MCF 10A (cell line): ENCODE measurements at regions of chr6 and their contacts with region 1.

Region 1: DNA sequence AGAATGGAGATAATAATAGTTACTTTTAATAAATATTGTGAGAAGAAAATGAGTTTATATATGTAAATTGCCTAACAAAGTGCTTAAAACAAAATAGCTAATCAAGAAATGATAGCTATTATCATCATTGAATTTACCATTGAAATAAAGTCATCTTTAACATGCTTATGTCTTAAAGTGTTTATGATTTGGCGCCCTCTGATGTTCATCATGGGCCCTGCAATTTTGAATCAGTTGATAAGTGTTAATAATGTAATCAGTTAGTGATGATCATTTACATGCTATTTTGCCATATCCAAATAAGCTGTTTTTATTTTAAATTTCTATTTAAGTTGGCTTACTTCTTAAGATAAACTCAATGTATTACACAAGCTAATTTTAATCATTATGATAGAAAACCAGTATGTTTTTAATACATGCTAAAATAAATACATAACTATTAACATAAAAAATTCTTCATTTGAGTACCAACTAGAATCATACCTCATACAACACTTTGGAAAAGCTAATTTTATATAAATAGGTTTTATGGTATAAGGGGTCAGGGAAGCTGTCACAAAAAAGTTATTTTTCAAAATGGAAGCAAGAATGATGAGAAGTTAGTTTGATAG is 39.2 kb upstream of the TPD52L1 start:
- DNase-seq: peak; percentile 74
- H3K4me3 Mint-ChIP-seq: no peak overlapping the region
- H3K27ac Mint-ChIP-seq: no peak overlapping the region
- H3K4me1 Mint-ChIP-seq: no peaks in the 10 kb centered on the region
- H3K27me3 Mint-ChIP-seq: no peaks in the 10 kb centered on the region
- CTCF ChIP-seq: peak; percentile 84

Region 2: DNA sequence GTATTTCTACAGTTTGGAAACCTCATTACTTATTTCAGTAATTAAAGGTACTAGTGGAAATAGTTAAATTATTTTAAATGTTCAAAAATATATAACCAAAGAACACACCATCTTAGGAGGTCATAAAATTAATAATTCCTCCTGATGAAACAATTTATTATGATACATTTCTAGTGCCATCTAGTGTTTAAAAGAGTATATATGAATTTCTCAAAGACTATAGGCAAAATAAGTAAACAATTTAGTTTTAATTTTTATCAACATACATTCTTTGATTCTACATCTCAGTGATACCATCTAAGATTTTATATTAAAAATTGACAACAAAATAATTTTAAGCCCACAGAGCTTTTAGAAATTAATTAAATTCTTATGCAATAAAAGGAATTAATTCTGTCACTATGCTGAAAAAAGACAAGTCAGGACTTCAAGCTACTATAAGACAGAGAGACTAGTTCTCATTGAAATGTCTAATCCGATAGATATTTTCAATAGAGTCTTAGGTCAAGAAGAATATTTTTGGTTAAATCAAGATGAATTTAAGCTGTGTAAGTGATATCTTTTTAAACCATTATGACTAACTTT is 259.9 kb before region 1 on chr6:
- CTCF ChIA-PET with region 1: no interaction called
- POLR2A ChIA-PET with region 1: no interaction called
- intact Hi-C with region 1: no loop called
- DNase-seq: peak; percentile 11
- H3K4me3 Mint-ChIP-seq: no peak overlapping the region
- H3K27ac Mint-ChIP-seq: no peak overlapping the region
- H3K4me1 Mint-ChIP-seq: no peaks in the 10 kb centered on the region
- H3K27me3 Mint-ChIP-seq: no peaks in the 10 kb centered on the region
- CTCF ChIP-seq: peak; percentile 38

Region 3: DNA sequence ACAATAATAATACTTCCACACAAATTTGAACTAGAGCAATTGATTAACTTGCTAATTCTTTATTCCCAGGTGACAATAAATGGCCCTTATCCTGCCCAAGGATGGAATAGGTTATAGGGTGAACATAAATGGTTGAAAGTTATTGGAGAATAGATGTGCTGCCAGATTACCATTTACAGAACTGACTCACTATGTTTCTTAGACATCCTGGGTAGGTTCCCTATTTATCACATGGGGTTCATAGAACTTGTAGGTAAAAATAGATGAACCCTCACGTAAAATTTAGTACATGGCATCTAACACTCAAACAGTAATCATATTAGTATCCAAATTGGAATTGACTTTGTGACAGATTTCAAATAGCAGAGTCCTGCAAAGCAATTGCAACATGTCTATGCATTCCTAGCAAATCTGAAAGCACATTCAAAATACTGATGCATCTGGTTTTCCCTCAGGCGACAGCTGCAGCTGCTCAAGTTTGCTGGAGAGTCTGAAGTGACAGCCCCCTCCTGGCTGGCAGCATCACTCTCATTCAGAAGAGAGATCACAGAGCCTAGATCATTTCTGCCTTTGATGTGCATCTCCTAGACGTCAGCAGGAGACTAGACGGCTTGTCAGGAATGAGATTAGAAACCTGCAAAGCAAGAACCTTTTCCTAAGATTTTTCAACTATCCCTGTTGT is 232.3 kb before region 1 on chr6:
- CTCF ChIA-PET with region 1: interaction called, 35 read pairs
- POLR2A ChIA-PET with region 1: interaction called, 3 read pairs
- intact Hi-C with region 1: no loop called
- DNase-seq: peak; percentile 66
- H3K4me3 Mint-ChIP-seq: peak overlapping the region; percentile 65
- H3K27ac Mint-ChIP-seq: peak overlapping the region; percentile 97
- H3K4me1 Mint-ChIP-seq: peaks cover 25% of the 10 kb centered on the region
- H3K27me3 Mint-ChIP-seq: no peaks in the 10 kb centered on the region
- CTCF ChIP-seq: no peak

Region 4: GRCh38 chr6:125031385-125031784 is 83.0 kb before region 1 on chr6:
- CTCF ChIA-PET with region 1: no interaction called
- POLR2A ChIA-PET with region 1: no interaction called
- intact Hi-C with region 1: no loop called
- DNase-seq: no peak
- H3K4me3 Mint-ChIP-seq: no peak overlapping the region
- H3K27ac Mint-ChIP-seq: no peak overlapping the region
- H3K4me1 Mint-ChIP-seq: peaks cover 6% of the 10 kb centered on the region
- H3K27me3 Mint-ChIP-seq: no peaks in the 10 kb centered on the region
- CTCF ChIP-seq: no peak

Region 5: DNA sequence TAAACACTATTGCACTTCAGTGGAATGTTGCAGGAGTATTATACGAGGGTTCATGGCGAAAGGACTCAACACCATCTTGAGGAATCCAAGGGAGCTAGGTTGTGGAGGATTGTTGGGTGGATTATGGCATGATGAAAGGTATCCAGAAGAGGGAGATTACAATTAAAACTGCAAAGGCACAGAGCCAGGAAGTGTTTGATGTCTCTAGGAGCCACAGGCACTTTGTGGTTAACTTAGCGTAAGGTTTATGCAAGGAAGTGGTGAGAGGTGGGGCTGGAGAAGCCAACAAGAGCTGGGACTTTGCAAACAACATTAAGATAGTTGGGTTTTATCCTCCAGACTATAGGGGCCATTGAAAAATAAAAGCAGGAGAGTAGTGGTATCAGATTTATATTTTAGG is 47.4 kb before region 1 on chr6:
- CTCF ChIA-PET with region 1: interaction called, 19 read pairs
- POLR2A ChIA-PET with region 1: no interaction called
- intact Hi-C with region 1: no loop called
- DNase-seq: peak; percentile 75
- H3K4me3 Mint-ChIP-seq: no peak overlapping the region
- H3K27ac Mint-ChIP-seq: no peak overlapping the region
- H3K4me1 Mint-ChIP-seq: no peaks in the 10 kb centered on the region
- H3K27me3 Mint-ChIP-seq: no peaks in the 10 kb centered on the region
- CTCF ChIP-seq: no peak

Region 6: DNA sequence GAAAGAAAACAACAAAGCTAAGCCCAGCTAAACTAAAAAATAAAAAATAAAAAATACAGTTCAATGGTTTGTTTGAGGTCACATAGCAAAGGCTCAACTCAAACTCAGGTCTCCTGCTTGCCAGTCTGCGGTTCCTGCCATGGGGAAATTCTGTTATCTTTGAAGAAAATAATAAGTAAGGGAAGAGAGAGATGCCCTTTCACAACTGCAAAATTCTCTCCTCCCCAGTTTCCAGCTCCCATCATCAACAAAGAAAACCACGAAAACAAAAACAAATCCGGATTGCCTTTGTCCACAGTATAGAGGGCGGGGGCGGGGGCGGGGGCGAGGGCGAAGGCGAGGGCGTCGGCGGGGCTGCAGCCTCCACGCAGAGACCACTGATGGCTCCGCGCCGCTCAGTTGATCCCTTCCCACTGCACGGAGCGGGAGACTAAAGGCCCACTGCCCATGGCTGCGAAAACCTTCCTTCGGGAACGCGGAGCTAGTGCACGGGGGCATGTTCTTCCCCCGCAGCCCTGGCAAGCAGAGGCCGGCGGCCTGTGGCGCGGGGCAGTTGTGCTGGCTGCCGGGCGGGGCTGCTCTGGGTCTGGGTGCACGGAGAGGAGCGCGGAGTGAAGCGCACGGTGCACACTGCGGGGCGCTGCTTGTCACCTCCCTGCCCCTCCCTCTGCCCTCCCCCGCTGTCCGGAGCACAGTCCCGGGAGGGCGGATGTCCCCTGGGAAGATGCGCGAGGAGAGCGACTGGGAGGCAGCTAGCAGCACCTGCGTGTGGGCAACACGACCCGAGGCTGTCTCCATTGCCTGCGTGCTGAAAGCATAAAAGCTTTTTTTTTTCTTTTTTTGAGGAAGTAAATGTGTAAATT is 14.9 kb before region 1 on chr6:
- CTCF ChIA-PET with region 1: interaction called, 35 read pairs
- POLR2A ChIA-PET with region 1: interaction called, 4 read pairs
- intact Hi-C with region 1: no loop called
- DNase-seq: peak; percentile 59
- H3K4me3 Mint-ChIP-seq: peak overlapping the region; percentile 69
- H3K27ac Mint-ChIP-seq: peak overlapping the region; percentile 14
- H3K4me1 Mint-ChIP-seq: peaks cover 37% of the 10 kb centered on the region
- H3K27me3 Mint-ChIP-seq: no peaks in the 10 kb centered on the region
- CTCF ChIP-seq: no peak

Region 7: DNA sequence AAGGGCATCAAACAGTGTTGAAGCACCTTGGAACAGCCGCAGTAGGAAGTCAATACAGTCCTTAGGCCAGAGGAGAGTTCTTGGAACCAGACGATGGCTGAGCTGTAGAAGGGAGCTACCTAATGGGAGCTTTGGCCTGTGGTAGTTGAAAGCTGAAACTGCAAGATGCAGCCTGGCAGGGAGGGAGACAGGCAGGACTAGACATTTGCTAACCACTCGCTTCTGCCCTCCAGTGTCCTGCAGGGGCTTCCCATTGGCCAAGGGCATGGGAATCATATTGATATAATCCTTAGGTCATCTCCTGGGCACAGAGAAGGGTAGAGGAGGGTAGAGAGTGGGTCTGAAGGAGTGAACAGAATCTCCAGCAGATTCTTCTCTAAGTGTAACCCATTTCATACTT is 99.6 kb after region 1 on chr6:
- CTCF ChIA-PET with region 1: no interaction called
- POLR2A ChIA-PET with region 1: no interaction called
- intact Hi-C with region 1: no loop called
- DNase-seq: no peak
- H3K4me3 Mint-ChIP-seq: no peak overlapping the region
- H3K27ac Mint-ChIP-seq: no peak overlapping the region
- H3K4me1 Mint-ChIP-seq: peaks cover 6% of the 10 kb centered on the region
- H3K27me3 Mint-ChIP-seq: no peaks in the 10 kb centered on the region
- CTCF ChIP-seq: no peak

Region 8: DNA sequence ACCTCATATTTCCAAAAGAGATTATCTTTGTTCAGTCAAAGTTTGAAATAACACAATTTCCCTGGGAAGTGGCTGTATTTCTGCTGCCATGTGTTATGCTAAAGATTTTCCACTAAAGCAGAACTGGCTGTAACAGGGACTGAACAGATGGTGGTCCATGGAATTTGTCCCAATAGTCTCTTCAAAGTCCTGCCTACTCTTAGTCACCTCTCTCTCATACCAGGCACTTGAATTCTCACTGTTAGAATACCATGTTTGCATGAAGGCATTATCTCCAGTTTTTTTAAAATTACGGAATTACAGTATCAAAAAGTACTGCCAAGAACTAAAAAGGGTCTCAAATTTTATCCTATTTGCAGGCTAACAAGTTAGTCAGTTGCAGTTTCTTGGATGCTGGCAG is 292.4 kb after region 1 on chr6:
- CTCF ChIA-PET with region 1: no interaction called
- POLR2A ChIA-PET with region 1: no interaction called
- intact Hi-C with region 1: no loop called
- DNase-seq: no peak
- H3K4me3 Mint-ChIP-seq: no peak overlapping the region
- H3K27ac Mint-ChIP-seq: no peak overlapping the region
- H3K4me1 Mint-ChIP-seq: no peaks in the 10 kb centered on the region
- H3K27me3 Mint-ChIP-seq: peaks cover 75% of the 10 kb centered on the region
- CTCF ChIP-seq: no peak

Region 9: GRCh38 chr6:125749173-125749864 is 635.0 kb after region 1 on chr6 and contains the start of gene HEY2:
- CTCF ChIA-PET with region 1: interaction called, 3 read pairs
- POLR2A ChIA-PET with region 1: no interaction called
- intact Hi-C with region 1: loop called (anchors 10 kb)
- DNase-seq: peak; percentile 88
- H3K4me3 Mint-ChIP-seq: peak within 1 kb of the TSS; percentile 73
- H3K27ac Mint-ChIP-seq: no peak within 1 kb of the TSS
- H3K4me1 Mint-ChIP-seq: peaks cover 9% of the 10 kb centered on the region
- H3K27me3 Mint-ChIP-seq: peaks cover 97% of the 10 kb centered on the region
- CTCF ChIP-seq: no peak
- total RNA-seq, gene HEY2: not detected in 2 replicates